PC-3 (cell line): ENCODE measurements at regions of chr18 and their contacts with region 1.

Region 1: GRCh38 chr18:24878289-24878688 is 417.9 kb downstream of the HRH4 start:
- DNase-seq: peak; percentile 61
- ATAC-seq: peak; percentile 64
- H3K4me3 ChIP-seq: no peak overlapping the region
- H3K27ac ChIP-seq: no peak overlapping the region
- H3K4me1 ChIP-seq: peaks cover 14% of the 10 kb centered on the region; the same call in 1 of the 2 replicates
- H3K27me3 ChIP-seq: peaks cover 6% of the 10 kb centered on the region; the same call in 1 of the 2 replicates
- CTCF ChIP-seq: peak; percentile 66

Region 2: GRCh38 chr18:24543805-24544498 is 334.3 kb before region 1 on chr18:
- CTCF ChIA-PET with region 1: no interaction called
- POLR2A ChIA-PET with region 1: no interaction called
- intact Hi-C with region 1: loop called (anchors 2 kb)
- DNase-seq: peak; percentile 58
- ATAC-seq: peak; percentile 38; the same call in 1 of the 2 replicates
- H3K4me3 ChIP-seq: no peak overlapping the region
- H3K27ac ChIP-seq: no peak overlapping the region
- H3K4me1 ChIP-seq: no peaks in the 10 kb centered on the region
- H3K27me3 ChIP-seq: peaks cover 47% of the 10 kb centered on the region
- CTCF ChIP-seq: peak; percentile 78

Region 3: DNA sequence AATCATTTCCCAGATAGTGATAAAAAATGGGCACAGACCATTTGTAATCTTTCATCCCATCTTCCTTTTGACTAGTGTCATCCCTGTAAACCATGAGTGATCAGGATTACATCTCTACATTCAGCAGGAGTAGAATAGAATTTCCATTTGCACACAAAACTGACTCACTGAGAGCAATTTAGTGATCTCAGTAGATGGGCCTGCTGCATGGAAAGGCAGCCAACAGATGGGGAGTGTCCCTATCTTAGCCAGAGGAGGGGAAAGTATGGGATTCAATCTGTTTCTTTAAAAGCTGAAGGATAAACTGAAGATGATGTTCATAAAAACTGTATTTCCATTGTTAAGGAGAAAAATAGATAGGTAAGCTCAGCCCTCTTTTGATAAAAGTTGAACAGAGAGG is 31.9 kb after region 1 on chr18:
- CTCF ChIA-PET with region 1: no interaction called
- POLR2A ChIA-PET with region 1: no interaction called
- intact Hi-C with region 1: no loop called
- DNase-seq: no peak
- ATAC-seq: no peak
- H3K4me3 ChIP-seq: no peak overlapping the region
- H3K27ac ChIP-seq: no peak overlapping the region
- H3K4me1 ChIP-seq: peaks cover 4% of the 10 kb centered on the region
- H3K27me3 ChIP-seq: no peaks in the 10 kb centered on the region
- CTCF ChIP-seq: no peak

Region 4: DNA sequence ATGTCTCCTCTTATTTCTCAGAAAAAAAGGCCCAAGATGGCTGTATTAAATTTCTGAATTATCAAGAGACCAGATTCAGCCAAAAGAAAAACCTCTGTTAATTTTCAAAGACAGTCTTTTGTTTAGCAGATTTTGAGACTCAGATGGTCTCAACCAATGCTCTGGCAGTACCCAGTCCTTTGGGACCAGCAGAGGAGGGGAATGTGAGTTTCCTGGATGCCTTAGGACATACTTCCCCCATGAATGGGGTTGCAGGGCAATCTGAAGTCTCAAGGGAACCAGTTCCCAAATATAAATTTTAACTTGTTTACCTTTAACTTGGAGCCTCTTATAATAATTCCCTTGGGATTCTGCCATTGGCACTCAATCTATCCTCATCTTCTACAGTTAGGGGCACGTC is 581.5 kb after region 1 on chr18:
- CTCF ChIA-PET with region 1: no interaction called
- POLR2A ChIA-PET with region 1: no interaction called
- intact Hi-C with region 1: loop called (anchors 2 kb)
- DNase-seq: no peak
- ATAC-seq: no peak
- H3K4me3 ChIP-seq: no peak overlapping the region
- H3K27ac ChIP-seq: no peak overlapping the region
- H3K4me1 ChIP-seq: no peaks in the 10 kb centered on the region
- H3K27me3 ChIP-seq: peaks cover 46% of the 10 kb centered on the region
- CTCF ChIP-seq: no peak

Region 5: GRCh38 chr18:25771841-25772240 is 893.6 kb after region 1 on chr18:
- CTCF ChIA-PET with region 1: no interaction called
- POLR2A ChIA-PET with region 1: no interaction called
- intact Hi-C with region 1: no loop called
- DNase-seq: no peak
- ATAC-seq: no peak
- H3K4me3 ChIP-seq: no peak overlapping the region
- H3K27ac ChIP-seq: no peak overlapping the region
- H3K4me1 ChIP-seq: no peaks in the 10 kb centered on the region
- H3K27me3 ChIP-seq: peaks cover 42% of the 10 kb centered on the region
- CTCF ChIP-seq: no peak

Region 6: DNA sequence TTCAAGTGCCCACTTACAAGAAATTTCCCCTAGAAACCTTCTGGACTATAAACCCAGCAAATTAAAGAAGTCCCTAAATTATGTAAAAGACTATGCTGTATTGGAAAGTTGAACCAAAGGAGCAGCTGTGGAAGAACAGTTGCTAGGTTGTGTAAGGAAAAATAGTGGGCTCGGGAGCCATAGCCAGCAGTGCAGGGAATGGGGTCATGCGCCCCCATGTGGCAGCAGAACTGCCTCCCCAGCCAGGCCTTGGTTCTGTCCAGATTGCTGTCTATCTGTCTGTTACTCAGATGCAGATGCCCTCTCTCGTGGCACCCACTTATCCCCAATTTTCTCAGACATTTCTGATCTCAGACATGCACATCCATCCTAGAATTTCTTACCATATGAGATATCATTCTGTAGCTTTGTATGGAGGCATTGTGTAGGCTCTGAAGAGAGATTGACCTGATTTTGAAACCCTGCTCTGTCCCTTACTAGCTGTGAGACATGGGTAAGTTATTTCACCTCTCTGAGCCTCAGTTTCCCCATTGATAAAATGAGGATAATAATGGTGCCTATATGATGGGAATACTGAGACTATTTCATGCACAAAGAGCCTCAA is 953.8 kb after region 1 on chr18:
- CTCF ChIA-PET with region 1: no interaction called
- POLR2A ChIA-PET with region 1: no interaction called
- intact Hi-C with region 1: loop called (anchors 1 kb)
- DNase-seq: peak; percentile 56
- ATAC-seq: peak; percentile 87
- H3K4me3 ChIP-seq: no peak overlapping the region
- H3K27ac ChIP-seq: no peak overlapping the region
- H3K4me1 ChIP-seq: 0 out of 2 replicates have a peak, but pooled peaks cover 8% of the 10 kb centered on the region
- H3K27me3 ChIP-seq: peaks cover 30% of the 10 kb centered on the region
- CTCF ChIP-seq: peak; percentile 83